ENCODE measurements at regions of chr14 and their contacts with region 1.

Region 1: GRCh38 chr14:73713803-73714655 is at the start of gene PNMA1:
- DNase-seq: peak; percentile 92
- ATAC-seq: peak; percentile 81
- H3K4me3 ChIP-seq: peak within 1 kb of the TSS; percentile 54 to 85 (median 77)
- H3K4me3 Mint-ChIP-seq: peak within 1 kb of the TSS; percentile 92
- H3K27ac ChIP-seq: peak within 1 kb of the TSS; percentile 39 to 81
- H3K27ac Mint-ChIP-seq: peak within 1 kb of the TSS; percentile 98
- H3K4me1 ChIP-seq: peaks cover 17 to 22% of the 10 kb centered on the region in 2 donors
- H3K4me1 Mint-ChIP-seq: peaks cover 21% of the 10 kb centered on the region
- H3K27me3 ChIP-seq: no peaks in the 10 kb centered on the region
- H3K27me3 Mint-ChIP-seq: no peaks in the 10 kb centered on the region
- CTCF ChIP-seq: no peak
- total RNA-seq, gene PNMA1: 29.6 and 31.6 TPM in 2 replicates

Region 2: DNA sequence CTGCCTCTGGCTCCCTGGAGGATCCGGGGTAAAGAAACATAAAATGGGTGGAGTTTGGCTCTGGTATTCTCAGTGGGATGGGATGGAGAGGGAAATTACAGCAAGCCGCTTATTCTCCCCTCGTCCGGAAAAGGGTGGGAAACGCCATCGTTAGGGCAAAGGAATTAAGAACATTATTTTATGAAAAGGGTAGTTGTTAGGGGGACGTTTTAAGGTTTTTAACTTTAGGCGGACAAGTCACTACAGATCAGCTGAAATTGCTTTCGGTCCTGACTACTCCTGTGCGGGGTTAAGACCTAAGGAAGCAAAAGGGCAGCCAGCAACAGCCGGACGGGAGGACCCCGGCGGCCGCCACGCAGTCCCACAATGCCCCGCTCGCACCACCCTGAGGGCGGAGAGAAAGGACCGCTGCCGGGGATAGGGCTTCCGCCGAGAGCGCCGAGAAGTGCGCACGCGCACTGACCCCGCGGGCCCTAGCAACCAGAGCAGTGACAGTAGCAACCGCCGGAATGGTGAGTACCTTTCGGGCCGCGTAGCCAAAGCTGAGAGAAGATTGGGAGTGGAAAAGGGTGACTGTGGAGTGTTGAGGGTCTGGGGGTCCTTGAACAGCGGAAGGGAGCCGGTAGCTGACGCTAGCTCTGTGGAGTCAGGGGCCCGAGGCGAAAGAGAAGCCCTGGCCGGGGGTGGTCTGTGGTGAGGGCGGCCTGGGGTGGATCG is 69.3 kb before region 1 on chr14 and contains the start of gene DNAL1:
- CTCF ChIA-PET with region 1: no interaction called
- POLR2A ChIA-PET with region 1: no interaction called
- intact Hi-C with region 1: loop called (anchors 2 kb)
- DNase-seq: peak; percentile 93
- ATAC-seq: peak; percentile 99
- H3K4me3 ChIP-seq: peak within 1 kb of the TSS; percentile 72 to 85 (median 77)
- H3K4me3 Mint-ChIP-seq: peak within 1 kb of the TSS; percentile 94
- H3K27ac ChIP-seq: peak within 1 kb of the TSS; percentile 45 to 91
- H3K27ac Mint-ChIP-seq: peak within 1 kb of the TSS; percentile 81
- H3K4me1 ChIP-seq: peaks cover 9 to 19% of the 10 kb centered on the region in 2 donors
- H3K4me1 Mint-ChIP-seq: peaks cover 17% of the 10 kb centered on the region
- H3K27me3 ChIP-seq: no peaks in the 10 kb centered on the region
- H3K27me3 Mint-ChIP-seq: no peaks in the 10 kb centered on the region
- CTCF ChIP-seq: no peak
- total RNA-seq, gene DNAL1: 6.3 and 10.7 TPM in 2 replicates

Region 3: DNA sequence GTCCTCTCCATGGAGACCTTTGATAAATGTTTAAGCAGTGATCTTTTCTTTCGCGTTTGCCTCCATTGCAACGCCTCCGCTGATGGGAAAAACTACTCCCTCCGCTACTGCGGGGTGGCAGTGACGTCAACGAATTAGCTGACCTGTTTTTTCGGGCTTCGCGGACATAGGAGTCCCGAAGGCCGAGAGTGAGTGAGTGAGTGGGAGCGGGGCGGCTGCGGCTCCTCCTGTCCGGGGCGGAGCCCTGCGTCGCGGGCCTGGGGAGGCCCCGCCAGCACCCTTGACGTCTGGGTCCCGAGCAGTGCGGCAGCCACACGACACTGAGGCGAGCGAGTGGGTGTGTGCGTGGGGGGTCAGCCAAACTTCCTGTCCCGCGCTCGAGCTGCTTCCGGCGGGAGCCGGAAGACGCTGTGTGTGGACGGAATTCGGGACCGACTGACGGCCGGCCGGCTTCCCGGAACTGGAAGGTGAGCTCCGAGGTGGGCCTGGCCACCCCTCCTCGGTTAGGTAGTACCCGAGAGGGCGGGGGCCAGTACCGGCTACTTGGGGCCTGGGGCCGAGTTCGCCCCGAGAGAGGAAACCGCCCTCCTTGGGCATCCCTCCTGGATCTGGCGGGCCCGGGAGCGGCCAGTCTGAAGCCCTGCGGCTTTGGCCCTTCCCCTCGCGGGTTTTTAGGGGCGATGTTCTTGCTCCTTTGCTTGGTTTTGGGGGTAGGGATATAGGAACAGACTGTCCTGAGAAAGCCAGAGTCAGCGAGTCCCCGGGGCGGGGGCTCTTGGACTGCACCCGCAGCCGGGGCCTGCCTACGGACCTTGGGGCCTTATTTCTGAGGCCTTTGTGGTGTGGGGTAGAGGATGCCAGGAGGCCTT is 172.7 kb after region 1 on chr14 and contains the start of gene ZNF410:
- CTCF ChIA-PET with region 1: interaction called, 3 read pairs
- POLR2A ChIA-PET with region 1: no interaction called
- intact Hi-C with region 1: loop called (anchors 1 kb)
- DNase-seq: peak; percentile 93
- ATAC-seq: peak; percentile 99
- H3K4me3 ChIP-seq: peak within 1 kb of the TSS; percentile 64 to 97 (median 94)
- H3K4me3 Mint-ChIP-seq: peak within 1 kb of the TSS; percentile 99
- H3K27ac ChIP-seq: peak within 1 kb of the TSS; percentile 94 to 96
- H3K27ac Mint-ChIP-seq: peak within 1 kb of the TSS; percentile 98
- H3K4me1 ChIP-seq: peaks cover 18 to 20% of the 10 kb centered on the region in 2 donors
- H3K4me1 Mint-ChIP-seq: peaks cover 41% of the 10 kb centered on the region
- H3K27me3 ChIP-seq: no peaks in the 10 kb centered on the region
- H3K27me3 Mint-ChIP-seq: no peaks in the 10 kb centered on the region
- CTCF ChIP-seq: no peak
- total RNA-seq, gene ZNF410: 58.3 and 69.0 TPM in 2 replicates

Region 4: DNA sequence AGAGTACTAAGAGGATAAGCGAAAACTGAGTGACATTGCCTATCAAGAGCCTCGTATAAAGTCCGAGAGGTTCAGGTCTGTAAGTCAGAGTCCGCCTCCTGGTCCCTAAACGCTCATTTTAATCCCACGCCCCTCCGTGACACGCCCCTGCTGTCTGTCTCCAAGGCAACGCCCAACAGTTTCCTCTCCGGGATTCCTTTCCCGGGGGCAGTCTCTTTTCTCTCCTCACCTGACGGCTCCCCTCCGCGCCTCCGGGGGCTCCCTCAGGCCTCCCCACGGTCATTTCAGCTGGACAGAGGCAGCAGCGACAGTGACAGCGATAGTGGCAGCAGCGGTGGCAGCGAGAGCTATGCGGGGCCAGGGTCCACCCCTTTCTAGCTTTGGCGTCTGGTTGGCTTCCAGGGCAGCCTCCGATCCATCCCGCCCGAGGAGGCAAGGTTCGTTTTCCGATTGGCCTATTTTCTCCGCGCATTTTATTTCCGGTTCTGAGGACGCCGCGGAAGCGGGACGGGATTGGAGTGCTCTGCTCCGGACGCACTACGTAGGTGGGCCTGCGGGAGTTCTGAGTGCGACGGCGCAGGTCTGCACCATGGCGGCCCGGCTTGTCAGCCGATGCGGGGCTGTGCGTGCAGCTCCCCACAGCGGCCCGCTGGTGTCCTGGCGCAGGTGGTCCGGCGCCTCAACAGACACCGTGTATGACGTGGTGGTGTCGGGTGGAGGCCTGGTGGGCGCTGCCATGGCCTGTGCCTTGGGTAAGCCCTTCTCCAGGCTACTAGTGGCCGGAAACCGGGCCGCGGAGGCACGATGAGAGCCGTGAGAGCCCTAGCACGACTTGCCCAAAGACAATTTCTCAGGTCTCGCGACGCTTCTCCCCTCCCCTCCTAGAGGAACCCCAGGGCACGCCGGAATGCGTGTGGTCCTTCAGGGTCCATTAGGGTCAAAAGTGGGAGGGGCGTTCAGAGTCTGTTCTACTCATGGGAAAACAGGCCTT is 236.0 kb after region 1 on chr14 and contains the starts of genes COQ6 and FAM161B:
- CTCF ChIA-PET with region 1: no interaction called
- POLR2A ChIA-PET with region 1: no interaction called
- intact Hi-C with region 1: loop called (anchors 2 kb)
- DNase-seq: peak; percentile 96
- ATAC-seq: peak; percentile 93
- H3K4me3 ChIP-seq: peak within 1 kb of the TSS; percentile 63 to 94 (median 89)
- H3K4me3 Mint-ChIP-seq: peak within 1 kb of the TSS; percentile 100
- H3K27ac ChIP-seq: peak within 1 kb of the TSS; percentile 78 to 96
- H3K27ac Mint-ChIP-seq: peak within 1 kb of the TSS; percentile 95
- H3K4me1 ChIP-seq: peaks cover 11 to 12% of the 10 kb centered on the region in 2 donors
- H3K4me1 Mint-ChIP-seq: peaks cover 20% of the 10 kb centered on the region
- H3K27me3 ChIP-seq: no peaks in the 10 kb centered on the region
- H3K27me3 Mint-ChIP-seq: no peaks in the 10 kb centered on the region
- CTCF ChIP-seq: peak; percentile 11
- total RNA-seq, gene COQ6: 34.1 and 38.2 TPM in 2 replicates
- total RNA-seq, gene FAM161B: 5.9 and 6.4 TPM in 2 replicates

Measured in B cell (primary cell).